ENCODE measurements at regions of chr6 and their contacts with region 1.

Region 1: DNA sequence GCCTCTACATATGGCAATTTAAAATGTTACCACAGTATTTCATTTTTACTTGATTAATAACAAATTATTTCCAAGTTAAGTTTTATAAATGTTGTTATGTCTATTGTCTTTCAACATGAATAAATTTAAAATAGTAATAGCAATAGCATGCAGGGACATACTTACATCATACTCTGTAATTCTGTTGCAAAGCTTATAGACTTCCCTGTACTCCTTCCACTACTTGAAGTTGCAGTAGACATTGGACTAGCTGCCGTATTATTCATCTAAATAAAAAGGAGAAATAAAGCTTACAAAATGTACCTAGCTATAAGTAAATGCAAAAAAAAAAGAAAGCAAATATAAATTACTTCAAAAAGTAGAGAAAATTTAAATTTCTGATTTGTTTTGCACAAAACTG is 12.7 kb downstream of the SUPT3H start:
- DNase-seq: no peak
- H3K4me3 Mint-ChIP-seq: no peak overlapping the region
- H3K27ac Mint-ChIP-seq: no peak overlapping the region
- H3K4me1 Mint-ChIP-seq: peaks cover 13% of the 10 kb centered on the region
- H3K27me3 Mint-ChIP-seq: no peaks in the 10 kb centered on the region

Region 2: GRCh38 chr6:45353654-45354053 is 11.4 kb before region 1 on chr6:
- CTCF ChIA-PET with region 1: interaction called, 6 read pairs
- intact Hi-C with region 1: loop called (anchors 1 kb)
- DNase-seq: no peak
- H3K4me3 Mint-ChIP-seq: no peak overlapping the region
- H3K27ac Mint-ChIP-seq: no peak overlapping the region
- H3K4me1 Mint-ChIP-seq: peaks cover 20% of the 10 kb centered on the region
- H3K27me3 Mint-ChIP-seq: no peaks in the 10 kb centered on the region

Region 3: GRCh38 chr6:46329568-46329967 is 964.5 kb after region 1 on chr6:
- CTCF ChIA-PET with region 1: no interaction called
- intact Hi-C with region 1: no loop called
- DNase-seq: no peak
- H3K4me3 Mint-ChIP-seq: no peak overlapping the region
- H3K27ac Mint-ChIP-seq: no peak overlapping the region
- H3K4me1 Mint-ChIP-seq: no peaks in the 10 kb centered on the region
- H3K27me3 Mint-ChIP-seq: peaks cover 18% of the 10 kb centered on the region

Measured in activated naive CD4-positive, alpha-beta T cell treated with anti-CD3 and anti-CD28 coated beads for 36 hours (primary cell).